PC-3 (cell line): ENCODE measurements at regions of chr17 and their contacts with region 1.

Region 1: DNA sequence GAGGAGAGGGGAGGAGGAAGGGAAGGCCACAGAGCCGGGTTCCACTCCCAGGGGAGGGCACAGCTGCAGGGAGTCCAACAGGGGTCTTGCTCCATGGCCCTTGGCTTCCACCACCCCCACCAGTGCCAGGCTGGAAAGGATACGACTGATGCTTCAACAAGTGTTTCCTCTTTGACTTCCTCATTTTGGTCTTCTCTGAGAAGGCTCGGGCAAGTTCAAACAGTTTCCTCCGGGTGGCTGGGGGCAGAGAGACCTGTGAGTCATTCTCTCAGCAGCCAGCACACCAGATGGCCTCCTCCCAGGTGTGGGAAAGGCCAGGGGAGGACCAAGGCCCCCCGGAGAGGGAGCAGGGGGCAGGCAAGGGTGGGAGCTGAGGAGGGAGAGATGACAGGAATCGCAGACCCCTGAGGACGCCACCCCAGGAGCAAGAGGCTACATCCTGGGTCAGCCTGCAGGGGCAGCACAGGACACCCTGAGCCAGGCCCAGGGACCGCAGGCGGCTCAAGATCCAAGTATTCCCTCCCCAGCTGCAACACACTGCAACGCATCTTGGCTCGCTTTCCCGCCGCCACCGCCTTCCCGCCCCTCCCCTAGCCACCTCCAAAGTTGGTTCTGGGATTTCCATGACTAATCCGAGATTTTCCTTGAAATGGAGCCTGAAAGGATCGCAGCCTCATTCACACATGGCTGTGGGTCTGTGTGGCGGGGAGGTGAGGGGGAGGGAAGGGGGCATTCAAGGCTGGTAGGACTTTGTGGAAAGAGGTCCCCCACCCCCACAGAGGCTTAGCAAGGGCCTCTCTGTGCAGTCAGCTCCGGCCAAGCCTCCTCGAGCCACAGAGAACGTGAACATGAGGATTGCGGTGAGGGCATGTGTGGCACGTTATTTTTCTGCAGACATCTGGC is 18.4 kb upstream of the MRPS23 start:
- DNase-seq: peak; percentile 93
- ATAC-seq: peak; percentile 85
- H3K4me3 ChIP-seq: peak overlapping the region; percentile 16; the same call in 1 of the 2 replicates
- H3K27ac ChIP-seq: peak overlapping the region; percentile 85
- H3K4me1 ChIP-seq: peaks cover 38% of the 10 kb centered on the region
- H3K27me3 ChIP-seq: no peaks in the 10 kb centered on the region
- CTCF ChIP-seq: peak; percentile 54

Region 2: DNA sequence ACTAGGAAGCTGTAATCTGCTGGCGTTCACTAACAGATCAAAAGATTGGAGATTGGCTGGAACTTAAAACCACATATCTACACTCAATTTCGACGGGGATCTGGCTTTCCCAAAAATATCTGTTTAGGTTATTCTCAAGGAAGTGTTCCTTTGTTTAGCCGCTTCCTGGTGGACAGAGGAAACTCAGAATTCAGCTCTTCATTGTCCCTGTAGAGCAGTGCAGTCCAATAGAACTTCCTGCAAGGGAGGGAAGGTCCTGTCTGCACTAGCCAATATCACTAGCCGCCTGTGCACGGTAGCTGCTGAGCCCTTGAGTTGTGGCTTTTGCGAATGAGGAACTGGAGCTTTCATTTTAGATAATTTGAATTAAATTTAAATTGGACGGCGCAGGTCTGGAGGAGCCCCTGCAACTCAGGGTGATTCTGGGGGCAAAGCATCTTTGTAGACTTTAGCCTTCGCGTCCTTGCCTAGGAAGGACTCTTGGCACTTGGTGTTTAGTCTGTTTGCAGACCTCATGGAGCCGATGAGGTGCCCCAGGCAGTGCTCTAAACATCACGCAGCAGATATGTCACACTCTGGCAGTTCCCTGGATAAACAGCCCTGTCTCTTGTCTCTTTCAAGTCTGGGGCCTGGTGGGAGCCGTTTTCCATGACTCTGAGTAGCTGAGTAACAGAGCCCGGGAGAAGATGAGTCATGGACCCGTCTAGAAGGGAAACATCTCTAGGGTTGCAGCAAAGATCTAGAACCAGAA is 245.4 kb before region 1 on chr17:
- CTCF ChIA-PET with region 1: no interaction called
- POLR2A ChIA-PET with region 1: no interaction called
- intact Hi-C with region 1: no loop called
- DNase-seq: peak; percentile 68
- ATAC-seq: peak; percentile 76
- H3K4me3 ChIP-seq: no peak overlapping the region
- H3K27ac ChIP-seq: peak overlapping the region; percentile 2; the same call in 1 of the 2 replicates
- H3K4me1 ChIP-seq: 0 out of 2 replicates have a peak, but pooled peaks cover 8% of the 10 kb centered on the region
- H3K27me3 ChIP-seq: no peaks in the 10 kb centered on the region
- CTCF ChIP-seq: no peak

Region 3: GRCh38 chr17:57902800-57903759 is 34.8 kb after region 1 on chr17:
- CTCF ChIA-PET with region 1: interaction called, 8 read pairs
- POLR2A ChIA-PET with region 1: interaction called, 3 read pairs
- intact Hi-C with region 1: loop called (anchors 5 kb)
- DNase-seq: peak; percentile 98
- ATAC-seq: peak; percentile 82
- H3K4me3 ChIP-seq: no peak overlapping the region
- H3K27ac ChIP-seq: peak overlapping the region; percentile 96
- H3K4me1 ChIP-seq: peaks cover 64% of the 10 kb centered on the region
- H3K27me3 ChIP-seq: no peaks in the 10 kb centered on the region
- CTCF ChIP-seq: no peak